B cell (primary cell): ENCODE measurements at regions of chr2 and their contacts with region 1.

Region 1: DNA sequence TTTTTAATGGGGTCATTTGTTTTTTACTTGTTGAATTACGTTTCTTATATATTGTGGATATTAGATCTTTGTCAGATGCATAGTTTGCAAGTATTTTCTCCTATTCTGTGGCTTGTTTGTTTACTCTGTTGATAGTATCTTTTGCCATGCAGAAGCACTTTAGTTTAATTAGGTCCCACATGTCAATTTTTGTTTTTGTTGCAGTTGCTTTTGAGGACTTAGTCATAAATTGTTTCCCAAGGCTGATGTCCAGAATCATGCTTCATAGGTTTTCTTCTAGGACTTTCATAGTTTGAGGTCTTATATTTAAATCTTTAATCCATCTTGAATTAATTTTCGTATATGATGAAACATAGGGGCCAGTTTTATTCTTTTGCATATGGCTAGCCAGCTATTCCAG is 13.2 kb downstream of the PIKFYVE start:
- DNase-seq: no peak
- ATAC-seq: no peak
- H3K4me3 ChIP-seq: no peak overlapping the region
- H3K4me3 Mint-ChIP-seq: no peak overlapping the region
- H3K27ac ChIP-seq: no peak overlapping the region
- H3K27ac Mint-ChIP-seq: no peak overlapping the region
- H3K4me1 ChIP-seq: no peaks in the 10 kb centered on the region
- H3K4me1 Mint-ChIP-seq: peaks cover 24% of the 10 kb centered on the region
- H3K27me3 ChIP-seq: no peaks in the 10 kb centered on the region
- H3K27me3 Mint-ChIP-seq: no peaks in the 10 kb centered on the region
- CTCF ChIP-seq: no peak

Region 2: DNA sequence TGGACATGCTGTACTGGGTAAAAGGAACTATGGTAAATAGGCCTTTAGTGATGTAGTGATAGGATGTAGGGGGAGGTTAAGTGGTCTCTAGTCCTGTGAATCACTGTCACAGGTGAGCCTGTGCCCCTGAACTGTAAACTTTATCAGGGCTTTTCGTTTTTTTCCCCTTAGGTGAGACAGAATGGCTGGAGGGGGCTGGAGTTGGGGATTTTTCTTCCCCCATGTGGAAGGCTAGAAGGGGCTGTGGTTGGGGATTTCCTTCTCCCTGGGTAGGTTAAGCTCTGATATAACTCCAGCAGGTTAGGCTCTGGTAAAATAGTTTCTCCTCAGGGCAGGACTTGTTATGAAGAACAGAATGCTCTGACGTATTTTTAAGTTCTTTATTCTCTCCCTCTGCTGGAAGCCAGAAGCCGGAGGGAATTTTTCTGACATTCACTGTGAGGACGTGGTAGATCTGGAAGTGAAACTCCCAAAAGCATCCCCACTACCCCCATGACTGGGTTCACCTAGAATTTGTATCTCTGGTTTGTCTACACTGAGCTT is 15.3 kb after region 1 on chr2:
- CTCF ChIA-PET with region 1: no interaction called
- POLR2A ChIA-PET with region 1: no interaction called
- intact Hi-C with region 1: loop called (anchors 2 kb)
- DNase-seq: peak; percentile 50
- ATAC-seq: peak; percentile 73
- H3K4me3 ChIP-seq: no peak overlapping the region
- H3K4me3 Mint-ChIP-seq: peak overlapping the region; percentile 38
- H3K27ac ChIP-seq: peak overlapping the region; percentile 43 to 89
- H3K27ac Mint-ChIP-seq: peak overlapping the region; percentile 72
- H3K4me1 ChIP-seq: peaks cover 14 to 18% of the 10 kb centered on the region in 2 donors
- H3K4me1 Mint-ChIP-seq: peaks cover 54% of the 10 kb centered on the region
- H3K27me3 ChIP-seq: no peaks in the 10 kb centered on the region
- H3K27me3 Mint-ChIP-seq: no peaks in the 10 kb centered on the region
- CTCF ChIP-seq: no peak